IMR-90 (cell line): ENCODE measurements at regions of chr2 and their contacts with region 1.

Region 1: DNA sequence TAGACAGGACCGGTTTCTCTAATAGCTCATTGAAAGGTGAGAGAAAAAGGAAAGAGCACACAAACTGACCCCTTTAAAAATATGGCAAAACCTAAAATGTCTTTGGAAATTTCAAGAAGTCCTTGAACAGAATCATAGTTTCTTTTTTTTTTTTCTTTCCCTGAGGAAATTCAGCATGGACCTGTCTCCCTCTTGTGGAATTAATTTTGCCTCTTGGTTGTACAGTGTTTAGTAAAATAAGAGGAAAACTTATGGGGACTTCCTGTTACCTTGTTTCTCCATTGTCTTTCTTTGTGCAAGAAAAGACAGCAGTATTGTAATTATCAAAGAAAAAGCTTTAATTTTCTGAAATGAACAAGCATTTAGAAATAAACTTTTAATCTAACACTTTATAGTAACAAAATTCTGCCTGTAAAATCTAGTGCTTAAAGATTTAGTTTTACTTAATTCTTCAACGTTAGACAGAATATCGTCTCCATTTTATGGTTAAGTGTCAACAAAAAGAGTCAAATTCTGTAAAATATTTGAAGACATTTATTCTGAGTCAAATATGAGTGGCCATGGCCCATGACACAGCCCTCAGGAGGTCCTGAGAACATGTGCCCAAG is 176.3 kb upstream of the NABP1 start:
- DNase-seq: peak; percentile 70
- ATAC-seq: peak; percentile 69
- H3K4me3 ChIP-seq: no peak overlapping the region
- H3K27ac ChIP-seq: no peak overlapping the region
- H3K4me1 ChIP-seq: peaks cover 4% of the 10 kb centered on the region; the same call in 1 of the 2 replicates
- H3K27me3 ChIP-seq: no peaks in the 10 kb centered on the region
- CTCF ChIP-seq: peak; percentile 90
- POLR2A ChIP-seq: no peak
- RAD21 ChIP-seq: peak; percentile 94

Region 2: DNA sequence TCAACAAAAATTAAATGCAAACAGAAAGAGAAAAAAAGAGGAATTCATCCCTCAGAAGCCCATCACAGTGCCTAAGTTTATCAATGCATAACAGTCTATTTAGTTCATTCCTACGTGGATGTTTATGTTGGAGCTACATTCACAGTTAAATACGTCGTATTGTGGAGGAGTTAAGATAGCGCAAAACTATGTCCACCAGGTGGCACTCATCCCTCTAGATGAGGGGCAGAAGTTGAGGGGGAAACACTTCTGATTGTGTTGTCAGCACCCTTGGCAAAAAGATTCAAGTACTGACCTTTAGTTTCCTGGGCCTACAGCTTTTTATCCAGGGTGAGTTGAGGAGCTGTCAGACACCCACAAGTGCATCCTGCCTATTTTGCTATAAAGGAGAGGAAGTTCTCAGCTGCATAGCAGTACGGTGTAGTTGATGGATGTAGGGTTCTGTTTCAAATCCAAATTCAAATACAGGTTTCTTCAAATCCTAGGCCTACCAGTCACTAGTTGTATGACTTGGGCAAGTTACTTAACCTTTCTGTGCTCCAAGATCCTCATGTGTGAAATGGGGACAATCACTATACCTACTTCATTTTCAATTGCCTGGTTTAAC is 283.3 kb before region 1 on chr2:
- CTCF ChIA-PET with region 1: interaction called, 15 read pairs
- POLR2A ChIA-PET with region 1: no interaction called
- dilution Hi-C with region 1: no loop called
- in situ Hi-C with region 1: no loop called
- intact Hi-C with region 1: loop called (anchors 1 kb)
- DNase-seq: peak; percentile 92
- ATAC-seq: peak; percentile 86
- H3K4me3 ChIP-seq: no peak overlapping the region
- H3K27ac ChIP-seq: peak overlapping the region; percentile 59; the same call in 1 of the 2 replicates
- H3K4me1 ChIP-seq: peaks cover 8% of the 10 kb centered on the region; the same call in 1 of the 2 replicates
- H3K27me3 ChIP-seq: no peaks in the 10 kb centered on the region
- CTCF ChIP-seq: peak; percentile 82
- POLR2A ChIP-seq: no peak
- RAD21 ChIP-seq: peak; percentile 83

Region 3: DNA sequence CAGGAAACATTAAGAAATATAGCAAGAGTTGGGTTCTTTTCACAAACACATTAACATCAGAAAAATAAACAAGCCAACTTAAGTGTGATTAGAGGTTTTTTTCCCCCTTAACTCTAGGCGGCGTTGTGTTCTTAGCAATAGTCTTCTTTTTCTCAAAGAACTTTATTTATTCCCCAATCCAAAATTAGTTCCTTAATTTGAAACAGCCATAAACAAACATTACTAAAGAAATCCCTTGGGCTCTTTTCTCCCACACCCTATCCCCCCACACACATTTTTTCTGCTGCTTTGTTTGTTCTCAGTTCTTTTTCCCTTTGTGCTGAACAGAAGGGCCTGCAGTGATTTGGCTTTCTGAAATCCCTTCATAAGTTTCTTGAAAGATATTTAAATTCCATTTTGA is 269.7 kb before region 1 on chr2:
- CTCF ChIA-PET with region 1: no interaction called
- POLR2A ChIA-PET with region 1: no interaction called
- dilution Hi-C with region 1: no loop called
- in situ Hi-C with region 1: no loop called
- intact Hi-C with region 1: loop called (anchors 5 kb)
- DNase-seq: peak; percentile 48
- ATAC-seq: peak; percentile 56
- H3K4me3 ChIP-seq: no peak overlapping the region
- H3K27ac ChIP-seq: no peak overlapping the region
- H3K4me1 ChIP-seq: peaks cover 18% of the 10 kb centered on the region
- H3K27me3 ChIP-seq: no peaks in the 10 kb centered on the region
- CTCF ChIP-seq: peak; percentile 60
- POLR2A ChIP-seq: no peak
- RAD21 ChIP-seq: peak; percentile 62

Region 4: GRCh38 chr2:191421950-191422349 is 79.7 kb before region 1 on chr2:
- CTCF ChIA-PET with region 1: interaction called, 11 read pairs
- POLR2A ChIA-PET with region 1: no interaction called
- dilution Hi-C with region 1: no loop called
- in situ Hi-C with region 1: no loop called
- intact Hi-C with region 1: no loop called
- DNase-seq: no peak
- ATAC-seq: no peak
- H3K4me3 ChIP-seq: no peak overlapping the region
- H3K27ac ChIP-seq: no peak overlapping the region
- H3K4me1 ChIP-seq: no peaks in the 10 kb centered on the region; the same call in 1 of the 2 replicates
- H3K27me3 ChIP-seq: no peaks in the 10 kb centered on the region
- CTCF ChIP-seq: no peak
- POLR2A ChIP-seq: no peak
- RAD21 ChIP-seq: no peak